CD4-positive, alpha-beta memory T cell (primary cell): ENCODE measurements at regions of chr9 and their contacts with region 1.

Region 1: DNA sequence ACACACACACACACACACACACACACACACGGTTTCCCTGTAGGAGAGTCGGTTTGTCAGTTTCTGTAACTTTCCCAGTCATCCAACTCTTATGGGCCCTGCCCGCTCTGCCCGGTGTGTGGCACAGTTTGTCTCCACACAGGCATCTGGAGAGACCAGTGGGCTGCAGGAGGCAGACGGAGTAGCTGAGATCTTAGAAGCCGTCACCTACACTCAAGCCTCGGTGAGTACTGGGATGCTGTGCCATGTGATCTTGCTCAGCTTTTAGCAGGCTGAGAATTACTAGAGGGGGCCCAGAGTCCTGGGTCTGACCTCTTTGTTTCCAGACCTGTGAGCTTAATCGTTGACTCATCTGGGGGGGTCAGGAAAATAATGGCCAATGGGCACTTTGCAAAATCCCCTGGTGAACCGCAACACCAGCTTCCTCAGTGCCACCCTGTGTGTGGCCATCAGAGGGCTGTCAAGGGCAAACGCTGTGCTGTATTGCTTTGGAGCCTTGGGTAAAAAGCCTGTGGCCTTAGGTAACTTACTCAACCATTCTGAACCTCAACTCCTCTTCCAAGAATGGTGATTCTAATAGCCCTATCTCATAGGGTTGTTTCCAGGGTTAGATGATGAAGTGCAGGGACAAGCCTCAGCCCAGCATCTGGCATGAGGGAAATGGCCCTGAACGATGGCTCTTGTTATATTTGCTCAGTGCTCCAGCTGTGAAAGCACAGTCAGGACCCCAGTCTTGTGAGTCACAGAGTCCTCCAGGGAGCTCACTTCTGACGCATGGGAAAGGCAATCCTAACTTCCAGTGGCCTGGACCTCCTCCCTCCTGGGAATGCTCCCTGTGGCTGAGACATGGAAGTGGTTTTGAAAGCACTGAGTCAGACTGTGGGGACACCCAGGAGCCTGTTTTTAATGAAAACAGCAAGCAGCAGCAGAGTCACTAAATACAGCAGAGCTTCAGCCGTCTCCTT is 45.6 kb downstream of the COL15A1 start:
- DNase-seq: no peak
- H3K4me3 ChIP-seq: no peak overlapping the region
- H3K4me3 Mint-ChIP-seq: no peak overlapping the region
- H3K27ac ChIP-seq: no peak overlapping the region
- H3K27ac Mint-ChIP-seq: peak overlapping the region in 1 of 7 donors; percentile 36
- H3K4me1 ChIP-seq: no peaks in the 10 kb centered on the region
- H3K4me1 Mint-ChIP-seq: peaks cover 3 to 6% (median 5%) of the 10 kb centered on the region in 4 donors
- H3K27me3 ChIP-seq: no peaks in the 10 kb centered on the region
- H3K27me3 Mint-ChIP-seq: peaks cover 0 to 5% of the 10 kb centered on the region in 2 donors

Region 2: GRCh38 chr9:98488571-98489312 is 500.6 kb before region 1 on chr9:
- CTCF ChIA-PET with region 1: no interaction called
- POLR2A ChIA-PET with region 1: no interaction called
- intact Hi-C with region 1: no loop called
- DNase-seq: no peak
- H3K4me3 ChIP-seq: no peak overlapping the region
- H3K4me3 Mint-ChIP-seq: no peak overlapping the region
- H3K27ac ChIP-seq: no peak overlapping the region
- H3K27ac Mint-ChIP-seq: no peak overlapping the region
- H3K4me1 ChIP-seq: no peaks in the 10 kb centered on the region
- H3K4me1 Mint-ChIP-seq: no peaks in the 10 kb centered on the region
- H3K27me3 ChIP-seq: no peaks in the 10 kb centered on the region
- H3K27me3 Mint-ChIP-seq: peaks cover 6 to 12% of the 10 kb centered on the region in 2 donors

Region 3: GRCh38 chr9:98974994-98975712 is 14.2 kb before region 1 on chr9:
- CTCF ChIA-PET with region 1: interaction called, 20 read pairs
- POLR2A ChIA-PET with region 1: no interaction called
- intact Hi-C with region 1: no loop called
- DNase-seq: peak; percentile 61 to 74 (median 71)
- H3K4me3 ChIP-seq: peak overlapping the region in 1 of 2 donors; percentile 49
- H3K4me3 Mint-ChIP-seq: peak overlapping the region in 7 of 8 donors; percentile 30 to 62 (median 53)
- H3K27ac ChIP-seq: no peak overlapping the region
- H3K27ac Mint-ChIP-seq: no peak overlapping the region
- H3K4me1 ChIP-seq: peaks cover 10% of the 10 kb centered on the region
- H3K4me1 Mint-ChIP-seq: no peaks in the 10 kb centered on the region
- H3K27me3 ChIP-seq: no peaks in the 10 kb centered on the region
- H3K27me3 Mint-ChIP-seq: peaks cover 5% of the 10 kb centered on the region in 2 donors